ENCODE measurements at regions of chr2 and their contacts with region 1.

Region 1: DNA sequence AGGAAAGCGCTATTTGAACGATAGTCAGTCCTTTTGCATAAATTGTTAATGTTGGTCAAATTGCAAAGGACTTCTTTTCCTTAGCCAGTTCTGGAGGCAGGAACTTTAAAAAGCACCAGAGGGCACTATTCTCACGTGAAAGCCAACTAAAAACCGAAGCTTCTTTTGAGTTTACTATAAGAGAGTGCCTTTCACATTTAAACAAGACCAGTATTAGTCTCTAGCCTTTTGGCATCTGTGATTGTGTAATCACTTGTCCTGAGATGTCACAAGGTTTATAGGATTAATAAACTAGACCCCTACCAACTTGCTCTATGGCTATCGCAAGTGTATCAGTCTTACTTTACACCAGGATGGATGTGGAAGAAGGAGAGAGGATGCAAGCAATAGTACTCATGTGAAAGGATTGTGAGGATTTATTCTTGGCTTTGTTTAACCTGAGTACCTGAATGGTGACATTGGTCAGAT is 14.4 kb upstream of the STAT4 start:
- DNase-seq: peak; percentile 58
- H3K4me3 ChIP-seq: no peak overlapping the region
- H3K27ac ChIP-seq: peak overlapping the region; percentile 99
- H3K4me1 ChIP-seq: peaks cover 47% of the 10 kb centered on the region
- H3K27me3 ChIP-seq: no peaks in the 10 kb centered on the region
- CTCF ChIP-seq: peak; percentile 73 to 75

Region 2: DNA sequence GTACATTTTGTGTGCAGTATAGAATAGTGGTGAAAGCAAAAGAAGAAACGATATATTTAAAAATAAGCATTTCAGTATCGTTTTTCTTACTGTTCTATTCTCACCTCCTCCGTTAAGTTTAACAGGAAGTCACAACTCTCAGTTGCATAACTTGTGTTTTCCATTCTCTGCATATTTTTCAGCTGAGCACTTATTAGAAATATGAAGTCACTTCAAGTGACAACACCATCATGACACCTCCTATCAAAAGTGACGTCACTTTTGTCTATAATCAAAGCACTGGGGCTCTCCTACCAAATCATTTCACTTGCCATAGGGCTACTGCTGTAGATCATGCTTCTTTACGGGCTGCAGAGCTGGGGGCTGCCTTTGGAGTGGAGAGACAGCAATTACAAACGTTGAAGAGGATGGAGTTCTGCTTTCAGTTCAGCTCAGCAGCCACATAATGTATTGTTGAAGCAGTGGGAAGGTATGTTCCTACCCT is 50.8 kb before region 1 on chr2:
- CTCF ChIA-PET with region 1: no interaction called
- dilution Hi-C with region 1: no loop called
- in situ Hi-C with region 1: no loop called
- intact Hi-C with region 1: no loop called
- DNase-seq: no peak
- H3K4me3 ChIP-seq: no peak overlapping the region
- H3K27ac ChIP-seq: peak overlapping the region; percentile 39
- H3K4me1 ChIP-seq: peaks cover 18% of the 10 kb centered on the region
- H3K27me3 ChIP-seq: no peaks in the 10 kb centered on the region
- CTCF ChIP-seq: no peak

Region 3: GRCh38 chr2:191202881-191203397 is 37.7 kb after region 1 on chr2:
- CTCF ChIA-PET with region 1: no interaction called
- dilution Hi-C with region 1: loop called (anchors 5 kb)
- in situ Hi-C with region 1: no loop called
- intact Hi-C with region 1: no loop called
- DNase-seq: peak; percentile 71
- H3K4me3 ChIP-seq: no peak overlapping the region
- H3K27ac ChIP-seq: peak overlapping the region; percentile 100
- H3K4me1 ChIP-seq: peaks cover 18% of the 10 kb centered on the region
- H3K27me3 ChIP-seq: no peaks in the 10 kb centered on the region
- CTCF ChIP-seq: no peak

Region 4: GRCh38 chr2:191302459-191303139 is 137.4 kb after region 1 on chr2:
- CTCF ChIA-PET with region 1: no interaction called
- dilution Hi-C with region 1: no loop called
- in situ Hi-C with region 1: no loop called
- intact Hi-C with region 1: loop called (anchors 5 kb)
- DNase-seq: peak; percentile 37
- H3K4me3 ChIP-seq: no peak overlapping the region
- H3K27ac ChIP-seq: peak overlapping the region; percentile 97
- H3K4me1 ChIP-seq: peaks cover 53% of the 10 kb centered on the region
- H3K27me3 ChIP-seq: no peaks in the 10 kb centered on the region
- CTCF ChIP-seq: peak; percentile 39 to 54

Region 5: GRCh38 chr2:191318729-191319078 is 153.5 kb after region 1 on chr2:
- CTCF ChIA-PET with region 1: no interaction called
- dilution Hi-C with region 1: no loop called
- in situ Hi-C with region 1: no loop called
- intact Hi-C with region 1: no loop called
- DNase-seq: peak; percentile 56
- H3K4me3 ChIP-seq: no peak overlapping the region
- H3K27ac ChIP-seq: peak overlapping the region; percentile 65
- H3K4me1 ChIP-seq: peaks cover 70% of the 10 kb centered on the region
- H3K27me3 ChIP-seq: no peaks in the 10 kb centered on the region
- CTCF ChIP-seq: no peak

Region 6: GRCh38 chr2:191376981-191377629 is 211.9 kb after region 1 on chr2:
- CTCF ChIA-PET with region 1: interaction called, 4 read pairs
- dilution Hi-C with region 1: no loop called
- in situ Hi-C with region 1: loop called in 1 of 2 experiments (anchors 10 kb)
- intact Hi-C with region 1: loop called (anchors 2 kb)
- DNase-seq: peak; percentile 86
- H3K4me3 ChIP-seq: peak overlapping the region in 1 of 3 experiments; percentile 6
- H3K27ac ChIP-seq: peak overlapping the region; percentile 78
- H3K4me1 ChIP-seq: peaks cover 20% of the 10 kb centered on the region
- H3K27me3 ChIP-seq: no peaks in the 10 kb centered on the region
- CTCF ChIP-seq: no peak

Region 7: DNA sequence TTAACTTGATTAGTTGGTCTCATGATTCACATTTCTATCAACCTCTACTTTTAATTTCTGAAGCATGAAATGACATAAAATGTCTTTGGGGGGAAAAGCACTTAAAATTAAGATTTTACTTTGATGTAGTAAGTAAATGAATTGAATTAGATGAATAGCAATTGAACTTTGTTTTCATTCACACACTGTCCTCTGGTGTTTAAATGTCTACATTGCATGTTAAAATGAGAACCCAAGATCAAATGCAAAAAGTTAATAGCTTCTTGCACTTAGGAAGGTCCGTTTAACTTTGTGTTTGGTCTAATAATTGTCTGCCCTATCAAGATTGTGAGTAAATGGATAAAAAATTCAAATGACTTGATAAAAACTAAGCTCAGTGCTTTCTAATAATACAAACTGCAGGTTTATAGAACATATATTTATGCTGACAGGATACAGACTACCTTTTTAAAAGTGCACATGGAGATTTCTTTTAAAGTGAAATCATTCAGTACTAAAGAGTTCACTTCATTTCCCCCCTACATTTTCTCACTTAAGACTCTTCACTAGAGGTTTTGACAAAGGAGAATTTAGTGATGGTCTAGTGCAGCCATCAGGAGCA is 356.5 kb after region 1 on chr2:
- CTCF ChIA-PET with region 1: no interaction called
- dilution Hi-C with region 1: no loop called
- in situ Hi-C with region 1: loop called in 1 of 2 experiments (anchors 25 kb)
- intact Hi-C with region 1: loop called (anchors 1 kb)
- DNase-seq: peak; percentile 18
- H3K4me3 ChIP-seq: no peak overlapping the region
- H3K27ac ChIP-seq: no peak overlapping the region
- H3K4me1 ChIP-seq: no peaks in the 10 kb centered on the region
- H3K27me3 ChIP-seq: no peaks in the 10 kb centered on the region
- CTCF ChIP-seq: peak; percentile 83 to 85

Measured in mammary epithelial cell (primary cell).